ENCODE measurements at regions of chr15 and their contacts with region 1.

Region 1: DNA sequence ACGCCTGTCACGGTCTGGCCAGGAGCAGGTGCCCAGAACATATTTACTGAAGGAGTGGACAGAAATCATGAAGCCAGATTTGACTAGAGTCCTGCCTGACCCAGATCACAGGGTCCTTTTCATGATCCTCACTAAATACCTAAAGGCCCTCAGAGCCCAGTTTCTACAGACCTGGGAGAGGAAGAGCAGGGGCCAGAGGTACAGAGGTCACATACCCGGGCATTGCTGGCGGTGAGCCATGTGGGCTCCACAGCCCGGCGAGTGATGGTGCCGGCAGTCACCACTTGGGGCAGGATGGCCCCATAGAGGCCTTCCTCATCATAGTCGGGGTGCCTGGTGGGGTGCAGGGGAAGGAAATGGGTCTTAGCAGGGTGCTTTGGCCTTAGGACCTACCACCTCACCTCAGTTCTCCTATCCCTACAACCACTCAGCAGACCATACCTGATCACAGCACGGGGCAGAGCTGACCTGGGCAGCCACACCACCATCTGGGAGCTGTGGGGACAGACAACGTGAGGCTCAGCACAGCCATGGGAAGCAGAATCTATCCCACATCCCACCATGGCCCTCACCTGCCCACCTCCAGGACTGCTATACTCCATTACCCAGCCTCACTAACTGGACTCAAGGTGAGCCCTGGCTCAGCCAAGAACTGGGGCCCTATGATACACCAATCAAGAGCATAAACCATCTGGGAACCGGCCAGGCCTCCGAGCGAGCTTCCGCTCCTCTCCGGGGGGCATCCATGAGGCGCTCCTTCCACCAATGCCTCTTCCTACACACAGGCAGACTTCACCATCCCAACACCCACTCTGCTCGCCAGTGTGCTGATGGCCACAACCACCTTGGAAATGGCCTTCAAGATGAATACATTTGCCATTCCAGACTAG is 12.9 kb downstream of the POLG start:
- DNase-seq: no peak

Region 2: DNA sequence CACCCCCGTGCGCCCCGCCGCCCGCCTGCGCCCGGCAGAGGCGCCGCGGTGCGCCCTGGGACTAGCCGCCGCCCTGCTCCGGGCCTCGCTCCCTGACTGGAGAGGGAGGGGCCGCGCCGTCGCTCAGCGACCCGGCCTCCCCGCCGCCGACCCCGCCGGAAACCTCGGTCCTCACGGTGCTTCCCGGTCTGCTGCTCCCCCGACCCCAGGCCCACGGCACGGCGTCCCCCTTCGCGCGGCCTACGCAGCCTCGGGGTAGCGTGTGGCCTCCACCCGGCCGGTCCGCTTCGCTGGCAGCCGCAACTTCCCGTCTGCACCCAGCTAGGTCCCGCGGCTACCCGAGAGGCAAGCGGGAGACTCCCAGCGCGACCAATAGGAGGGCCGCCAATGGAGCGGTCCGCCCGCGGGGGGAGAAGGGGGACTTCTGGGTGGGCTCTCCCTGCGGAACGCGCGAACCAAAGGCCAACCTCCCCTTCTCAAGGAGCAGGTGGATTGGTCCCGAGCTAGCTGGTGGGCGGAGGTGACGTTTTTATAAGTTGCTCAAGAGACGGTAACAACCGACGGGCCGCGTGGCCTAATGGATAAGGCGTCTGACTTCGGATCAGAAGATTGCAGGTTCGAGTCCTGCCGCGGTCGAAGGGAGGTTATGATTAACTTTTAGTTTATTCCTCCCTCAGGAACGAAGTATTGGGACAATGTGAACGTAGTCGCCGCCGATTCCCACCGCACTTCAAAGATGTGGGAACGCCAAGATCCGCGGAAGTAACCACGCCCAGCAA is 12.9 kb after region 1 on chr15 and contains the start of gene POLG:
- CTCF ChIA-PET with region 1: interaction called, 7 read pairs
- POLR2A ChIA-PET with region 1: interaction called, 27 read pairs
- DNase-seq: peak; percentile 98